Astrocyte of the cerebellum (primary cell): ENCODE measurements at regions of chr18 and their contacts with region 1.

Region 1: GRCh38 chr18:28522121-28522679 is 345.3 kb upstream of the CDH2 start:
- DNase-seq: no peak
- H3K4me3 ChIP-seq: no peak overlapping the region
- CTCF ChIP-seq: no peak

Region 2: GRCh38 chr18:28469946-28470345 is 52.3 kb before region 1 on chr18:
- in situ Hi-C with region 1: loop called (anchors 5 kb)
- DNase-seq: no peak
- H3K4me3 ChIP-seq: no peak overlapping the region
- CTCF ChIP-seq: no peak

Region 3: DNA sequence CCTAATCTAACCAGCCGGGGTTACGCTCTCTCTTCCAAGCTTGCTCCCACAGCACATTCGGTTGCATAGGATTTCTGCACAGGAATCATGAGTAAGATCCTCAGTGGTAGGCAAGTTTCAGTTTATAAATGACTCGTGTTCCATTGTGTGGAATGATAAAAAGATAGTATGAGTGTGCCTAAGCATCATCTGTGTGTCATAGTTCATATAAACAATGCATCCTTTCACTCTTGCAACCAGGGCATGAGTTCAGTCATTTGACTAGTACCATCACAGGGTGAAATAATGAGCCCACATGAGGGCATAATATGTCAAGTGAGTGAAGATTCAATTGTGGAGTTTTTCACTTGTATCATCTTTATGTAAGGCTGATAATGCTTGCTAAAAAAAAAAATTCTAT is 71.8 kb after region 1 on chr18:
- in situ Hi-C with region 1: no loop called
- DNase-seq: no peak
- H3K4me3 ChIP-seq: no peak overlapping the region
- CTCF ChIP-seq: no peak